IMR-90 (cell line): ENCODE measurements at regions of chr18 and their contacts with region 1.

Region 1: GRCh38 chr18:29749704-29750103 is 1292.8 kb downstream of the DSC3 start:
- DNase-seq: peak; percentile 60
- ATAC-seq: peak; percentile 79
- H3K4me3 ChIP-seq: no peak overlapping the region
- H3K27ac ChIP-seq: no peak overlapping the region
- H3K4me1 ChIP-seq: peaks cover 1% of the 10 kb centered on the region; the same call in 1 of the 2 replicates
- H3K27me3 ChIP-seq: no peaks in the 10 kb centered on the region
- CTCF ChIP-seq: no peak
- POLR2A ChIP-seq: no peak
- RAD21 ChIP-seq: no peak

Region 2: GRCh38 chr18:29494371-29494770 is 255.3 kb before region 1 on chr18:
- CTCF ChIA-PET with region 1: no interaction called
- POLR2A ChIA-PET with region 1: no interaction called
- dilution Hi-C with region 1: no loop called
- in situ Hi-C with region 1: no loop called
- intact Hi-C with region 1: loop called (anchors 1 kb)
- DNase-seq: no peak
- ATAC-seq: no peak
- H3K4me3 ChIP-seq: no peak overlapping the region
- H3K27ac ChIP-seq: no peak overlapping the region
- H3K4me1 ChIP-seq: no peaks in the 10 kb centered on the region
- H3K27me3 ChIP-seq: no peaks in the 10 kb centered on the region
- CTCF ChIP-seq: no peak
- POLR2A ChIP-seq: no peak
- RAD21 ChIP-seq: no peak